ENCODE measurements at regions of chrX and their contacts with region 1.

Region 1: DNA sequence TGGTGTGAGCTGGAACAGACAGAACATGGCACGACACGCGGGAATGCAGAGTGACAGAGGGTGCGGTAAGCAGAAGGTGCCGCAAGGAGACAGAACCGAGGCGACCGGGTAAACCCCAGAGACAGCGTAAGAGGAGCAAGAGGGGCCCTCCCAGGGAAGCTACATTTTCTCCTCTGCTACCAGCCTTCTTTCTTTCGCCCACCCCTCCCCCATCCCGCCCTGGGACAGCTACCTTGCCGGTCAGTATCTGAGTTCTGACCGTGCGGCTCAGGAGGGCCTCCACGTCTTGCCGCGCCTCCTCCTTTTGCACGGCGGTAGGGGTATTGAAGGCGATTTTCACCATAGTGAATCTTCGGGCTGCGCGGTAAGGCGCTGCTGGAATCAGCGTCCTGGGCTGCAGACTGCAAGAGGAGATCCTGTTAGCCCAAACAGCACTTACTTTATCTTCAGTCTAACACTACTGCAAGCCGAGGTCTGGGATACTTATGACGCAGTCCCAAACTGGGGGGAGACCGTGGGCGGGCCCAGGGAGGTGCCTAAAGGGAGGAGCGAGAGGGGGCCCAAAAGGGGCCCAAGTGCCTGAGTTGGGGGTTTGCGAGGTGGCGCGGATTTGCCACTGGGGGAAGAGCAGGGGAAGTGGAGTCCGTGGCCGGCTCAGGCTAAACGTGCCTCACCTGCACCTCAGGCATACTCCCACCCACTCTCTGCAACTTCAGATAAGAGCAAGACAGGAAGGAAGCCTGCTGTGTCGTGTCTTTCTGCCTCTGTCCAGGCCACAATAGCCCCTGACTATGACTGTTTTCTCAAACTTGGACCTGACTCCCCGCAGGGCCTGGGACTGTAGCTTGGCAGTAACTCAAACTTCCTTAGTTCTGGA is at the start of gene ITM2A:
- DNase-seq: peak; percentile 78
- ATAC-seq: peak; percentile 77
- H3K4me3 Mint-ChIP-seq: peak within 1 kb of the TSS; percentile 90
- H3K27ac Mint-ChIP-seq: peak within 1 kb of the TSS; percentile 95
- H3K4me1 Mint-ChIP-seq: peaks cover 35% of the 10 kb centered on the region
- H3K27me3 Mint-ChIP-seq: no peaks in the 10 kb centered on the region
- CTCF ChIP-seq: no peak
- total RNA-seq, gene ITM2A: 63.1 to 70.5 TPM

Region 2: GRCh38 chrX:79161655-79162054 is 205.5 kb before region 1 on chrX:
- CTCF ChIA-PET with region 1: no interaction called
- POLR2A ChIA-PET with region 1: interaction called, 3 read pairs
- intact Hi-C with region 1: loop called (anchors 10 kb)
- DNase-seq: peak; percentile 61
- ATAC-seq: peak; percentile 82
- H3K4me3 Mint-ChIP-seq: peak overlapping the region; percentile 77
- H3K27ac Mint-ChIP-seq: peak overlapping the region; percentile 99
- H3K4me1 Mint-ChIP-seq: peaks cover 67% of the 10 kb centered on the region
- H3K27me3 Mint-ChIP-seq: no peaks in the 10 kb centered on the region
- CTCF ChIP-seq: no peak